Right ventricle myocardium inferior (tissue), 1 donor: ENCODE measurements at regions of chr3 and their contacts with region 1.

Region 1: GRCh38 chr3:52144034-52144795 is 10.0 kb downstream of the POC1A start:
- DNase-seq: peak; percentile 88
- ATAC-seq: peak; percentile 83

Region 2: DNA sequence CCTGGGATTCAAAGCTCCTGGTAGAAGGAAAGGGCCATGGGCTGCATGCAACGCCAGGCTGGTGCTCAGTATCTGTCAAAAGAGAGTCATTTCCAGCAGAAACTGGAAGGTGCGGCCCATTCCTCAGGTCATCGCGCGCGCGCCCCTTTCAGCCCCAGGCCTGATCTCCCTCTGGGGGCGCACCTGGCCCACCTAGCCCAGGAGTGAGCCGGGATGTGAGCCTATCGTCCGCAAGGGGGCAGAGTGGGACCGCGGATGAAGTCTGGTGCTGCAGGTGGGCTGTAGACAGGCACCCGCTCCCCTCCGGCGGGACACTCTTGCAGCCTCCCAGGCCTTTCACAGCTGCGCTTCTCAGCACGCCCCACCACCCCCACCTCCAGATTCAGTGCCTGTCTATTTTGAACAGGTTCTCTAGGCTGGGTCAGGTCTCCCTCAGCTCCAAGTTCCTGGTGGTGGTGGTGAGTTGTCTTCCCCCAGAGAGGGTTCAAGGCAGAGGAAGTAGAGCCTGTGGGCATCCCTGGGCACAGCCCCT is 142.7 kb before region 1 on chr3:
- intact Hi-C with region 1: loop called (anchors 1 kb)
- DNase-seq: peak; percentile 90
- ATAC-seq: peak; percentile 66